Naive thymus-derived CD4-positive, alpha-beta T cell (primary cell): ENCODE measurements at regions of chr12 and their contacts with region 1.

Region 1: GRCh38 chr12:93839064-93839463 is 161.9 kb downstream of the CRADD start:
- DNase-seq: no peak
- ATAC-seq: no peak
- H3K4me3 ChIP-seq: no peak overlapping the region
- H3K4me3 Mint-ChIP-seq: no peak overlapping the region
- H3K27ac ChIP-seq: no peak overlapping the region
- H3K27ac Mint-ChIP-seq: no peak overlapping the region
- H3K4me1 ChIP-seq: no peaks in the 10 kb centered on the region
- H3K4me1 Mint-ChIP-seq: peaks cover 0 to 8% (median 0%) of the 10 kb centered on the region in 7 donors
- H3K27me3 ChIP-seq: no peaks in the 10 kb centered on the region
- H3K27me3 Mint-ChIP-seq: no peaks in the 10 kb centered on the region

Region 2: GRCh38 chr12:93727195-93727811 is 111.8 kb before region 1 on chr12:
- CTCF ChIA-PET with region 1: no interaction called
- POLR2A ChIA-PET with region 1: no interaction called
- intact Hi-C with region 1: loop called in 1 of 2 experiments (anchors 5 kb)
- DNase-seq: no peak
- ATAC-seq: no peak
- H3K4me3 ChIP-seq: no peak overlapping the region
- H3K4me3 Mint-ChIP-seq: no peak overlapping the region
- H3K27ac ChIP-seq: no peak overlapping the region
- H3K27ac Mint-ChIP-seq: no peak overlapping the region
- H3K4me1 ChIP-seq: no peaks in the 10 kb centered on the region
- H3K4me1 Mint-ChIP-seq: peaks cover 0 to 28% (median 9%) of the 10 kb centered on the region in 7 donors
- H3K27me3 ChIP-seq: no peaks in the 10 kb centered on the region
- H3K27me3 Mint-ChIP-seq: no peaks in the 10 kb centered on the region